Activated T-helper 1 cell treated with anti-CD3 and anti-CD28 coated beads, Interleukin-12 subunit alpha, Interleukin-12 subunit beta, Interleukin-2, Interleukin-4 antibody, amounts not matched to agents 30 ng/mL and 10 ng/mL and 1 ng/mL, durations not matched to agents 14 hours and 24 hours and 36 hours (primary cell): ENCODE measurements at regions of chr15 and their contacts with region 1.

Region 1: GRCh38 chr15:48330855-48331795 is at the start of gene DUT:
- DNase-seq: peak; percentile 81
- H3K4me3 Mint-ChIP-seq: peak within 1 kb of the TSS; percentile 100
- H3K27ac Mint-ChIP-seq: peak within 1 kb of the TSS; percentile 99
- H3K4me1 Mint-ChIP-seq: peaks cover 46% of the 10 kb centered on the region
- H3K27me3 Mint-ChIP-seq: no peaks in the 10 kb centered on the region
- total RNA-seq, gene DUT: 244 and 252 TPM in 2 replicates

Region 2: DNA sequence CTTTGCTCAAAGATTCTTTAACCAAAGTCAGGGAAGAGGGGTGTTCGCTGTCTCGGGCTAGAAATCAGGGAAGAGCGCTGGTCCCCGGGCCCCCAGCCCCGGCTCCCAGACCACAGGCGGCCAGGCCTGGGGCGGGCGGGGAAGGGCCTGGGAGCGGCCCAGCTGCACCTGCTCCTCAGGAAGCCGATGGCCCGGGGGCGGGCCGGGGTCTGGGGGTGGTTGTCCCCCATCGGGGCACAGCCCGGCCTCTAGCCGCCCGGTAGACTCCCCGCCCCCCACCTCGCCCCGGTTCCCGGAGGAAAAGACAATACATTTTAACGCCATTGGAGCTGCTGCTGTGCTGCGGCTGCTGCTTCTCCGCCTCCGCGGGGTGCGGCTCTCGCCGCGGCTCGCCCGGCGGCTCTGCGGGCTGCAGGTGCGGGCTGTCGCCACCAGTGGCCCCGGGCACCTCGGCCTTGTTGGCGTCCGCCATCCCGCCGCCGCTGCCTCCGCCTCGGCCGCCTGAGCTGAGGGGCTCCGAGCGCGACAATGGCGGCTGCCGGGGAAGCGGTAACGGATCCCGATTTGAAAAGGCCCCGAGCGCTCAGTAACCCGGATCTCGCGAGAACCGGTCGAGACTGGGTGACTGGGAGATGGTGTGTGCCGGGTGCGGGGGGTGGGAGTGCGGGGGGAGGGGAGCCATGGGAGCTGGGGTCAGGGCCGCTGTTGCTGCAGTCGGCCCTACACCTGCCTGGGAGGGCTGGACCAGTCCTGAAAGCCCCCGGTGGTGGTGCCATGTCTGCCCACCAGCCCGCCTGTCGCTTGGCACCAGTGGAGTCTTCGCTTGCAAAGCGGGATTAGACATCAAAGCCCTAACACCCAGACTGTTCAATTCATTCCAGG is 153.1 kb before region 1 on chr15 and contains the start of gene MYEF2:
- intact Hi-C with region 1: loop called (anchors 1 kb)
- DNase-seq: peak; percentile 70
- H3K4me3 Mint-ChIP-seq: peak within 1 kb of the TSS; percentile 90
- H3K27ac Mint-ChIP-seq: peak within 1 kb of the TSS; percentile 90
- H3K4me1 Mint-ChIP-seq: peaks cover 19% of the 10 kb centered on the region
- H3K27me3 Mint-ChIP-seq: peaks cover 25% of the 10 kb centered on the region
- total RNA-seq, gene MYEF2: 20.3 and 21.1 TPM in 2 replicates

Region 3: GRCh38 chr15:48352474-48353072 is 21.4 kb after region 1 on chr15:
- intact Hi-C with region 1: loop called (anchors 2 kb)
- DNase-seq: peak; percentile 32
- H3K4me3 Mint-ChIP-seq: no peak overlapping the region
- H3K27ac Mint-ChIP-seq: no peak overlapping the region
- H3K4me1 Mint-ChIP-seq: peaks cover 11% of the 10 kb centered on the region
- H3K27me3 Mint-ChIP-seq: peaks cover 8% of the 10 kb centered on the region

Region 4: DNA sequence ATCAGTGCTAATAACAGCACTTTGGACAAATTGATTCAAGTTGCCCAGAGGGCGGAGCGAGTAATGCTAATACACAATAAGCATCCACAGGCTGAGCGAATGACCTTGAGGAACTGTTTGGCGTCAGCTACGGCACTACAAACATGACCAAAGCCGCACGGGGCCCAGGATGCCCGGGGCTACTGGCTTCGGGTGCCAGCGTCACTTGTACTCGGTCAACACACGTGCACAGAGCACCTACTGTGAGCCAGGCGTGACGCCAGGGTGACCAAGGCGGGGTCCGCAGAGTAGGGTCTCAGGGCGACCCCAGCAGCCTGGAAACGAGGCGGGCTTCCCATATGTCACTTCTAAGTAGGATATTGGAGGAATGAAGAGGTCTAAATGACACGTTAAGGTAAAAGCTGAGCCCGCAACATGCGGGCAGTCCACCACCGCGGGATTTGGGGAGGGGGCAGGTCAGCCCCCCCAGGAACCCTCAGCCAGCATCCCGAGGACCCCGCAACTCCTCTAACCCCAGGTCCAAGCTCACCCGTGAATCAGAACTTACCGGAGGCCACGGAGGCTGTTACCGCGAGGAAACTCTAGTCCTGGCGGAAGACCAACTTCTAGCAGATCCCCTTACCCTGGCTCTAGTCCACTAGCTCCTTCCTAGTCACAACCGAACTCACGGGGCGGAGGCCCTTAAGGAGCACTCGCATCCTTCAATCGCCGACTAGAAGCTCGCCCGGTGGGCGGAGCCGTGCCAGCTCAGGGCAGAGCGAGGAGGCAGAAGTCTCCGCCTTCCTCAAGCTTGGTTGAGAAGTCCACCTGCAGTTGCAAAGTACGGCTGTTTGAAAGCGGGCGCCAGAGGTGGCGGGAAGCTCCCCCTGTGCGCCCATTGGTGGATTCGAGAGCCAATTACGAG is 479.5 kb after region 1 on chr15 and contains the start of gene CEP152:
- intact Hi-C with region 1: loop called (anchors 1 kb)
- DNase-seq: peak; percentile 98
- H3K4me3 Mint-ChIP-seq: peak within 1 kb of the TSS; percentile 97
- H3K27ac Mint-ChIP-seq: peak within 1 kb of the TSS; percentile 93
- H3K4me1 Mint-ChIP-seq: peaks cover 44% of the 10 kb centered on the region
- H3K27me3 Mint-ChIP-seq: peaks cover 15% of the 10 kb centered on the region
- total RNA-seq, gene CEP152: 27.3 and 28.0 TPM in 2 replicates

Region 5: GRCh38 chr15:48963524-48964113 is 632.5 kb after region 1 on chr15 and contains the start of gene SHC4:
- intact Hi-C with region 1: loop called (anchors 10 kb)
- DNase-seq: no peak
- H3K4me3 Mint-ChIP-seq: peak within 1 kb of the TSS; percentile 84
- H3K27ac Mint-ChIP-seq: peak within 1 kb of the TSS; percentile 82
- H3K4me1 Mint-ChIP-seq: peaks cover 64% of the 10 kb centered on the region
- H3K27me3 Mint-ChIP-seq: peaks cover 11% of the 10 kb centered on the region
- total RNA-seq, gene SHC4: 25.7 and 26.4 TPM in 2 replicates

Region 6: GRCh38 chr15:49046220-49047102 is 715.3 kb after region 1 on chr15 and contains the start of gene SECISBP2L:
- intact Hi-C with region 1: loop called (anchors 10 kb)
- DNase-seq: peak; percentile 87
- H3K4me3 Mint-ChIP-seq: peak within 1 kb of the TSS; percentile 96
- H3K27ac Mint-ChIP-seq: peak within 1 kb of the TSS; percentile 91
- H3K4me1 Mint-ChIP-seq: peaks cover 35% of the 10 kb centered on the region
- H3K27me3 Mint-ChIP-seq: no peaks in the 10 kb centered on the region
- total RNA-seq, gene SECISBP2L: 38.0 and 44.8 TPM in 2 replicates